Activated CD4-positive, alpha-beta memory T cell treated with anti-CD3 and anti-CD28 coated beads for 36 hours (primary cell): ENCODE measurements at regions of chr16 and their contacts with region 1.

Region 1: DNA sequence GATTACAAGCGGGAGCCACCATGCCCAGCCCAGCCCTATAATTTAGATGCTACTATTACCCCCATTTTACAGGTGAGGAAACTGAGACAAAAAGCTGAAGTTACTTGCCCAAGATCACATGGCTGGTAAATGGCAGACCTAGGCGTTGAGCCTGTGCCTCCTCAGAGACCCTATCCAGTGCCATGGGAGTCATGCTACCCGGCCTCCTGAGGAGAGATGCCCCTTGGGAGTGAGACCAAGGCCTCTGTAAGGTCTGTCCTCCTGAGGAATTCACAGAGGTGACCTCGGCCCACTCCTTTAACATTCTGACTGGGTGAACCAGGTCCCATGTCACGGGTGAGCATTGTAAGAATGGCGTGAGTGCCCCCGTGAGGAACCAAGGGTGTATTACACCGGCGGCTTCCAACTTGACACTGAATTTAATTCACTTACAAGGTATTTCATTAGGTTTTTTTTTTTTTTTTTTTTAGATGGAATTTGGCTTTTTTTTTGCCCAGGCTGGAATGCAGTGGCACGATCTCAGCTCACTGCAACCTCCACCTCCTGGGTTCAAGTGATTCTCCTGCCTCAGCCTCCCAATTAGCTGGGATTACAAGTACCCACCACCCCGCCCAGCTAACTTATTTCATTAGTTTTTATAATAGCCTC is 95.7 kb downstream of the ABCC6 start:
- DNase-seq: peak; percentile 80
- H3K4me3 Mint-ChIP-seq: no peak overlapping the region
- H3K27ac Mint-ChIP-seq: no peak overlapping the region
- H3K4me1 Mint-ChIP-seq: no peaks in the 10 kb centered on the region
- H3K27me3 Mint-ChIP-seq: no peaks in the 10 kb centered on the region

Region 2: GRCh38 chr16:15765880-15766279 is 361.7 kb before region 1 on chr16:
- CTCF ChIA-PET with region 1: interaction called, 11 read pairs
- POLR2A ChIA-PET with region 1: no interaction called
- intact Hi-C with region 1: loop called (anchors 1 kb)
- DNase-seq: peak; percentile 31
- H3K4me3 Mint-ChIP-seq: no peak overlapping the region
- H3K27ac Mint-ChIP-seq: no peak overlapping the region
- H3K4me1 Mint-ChIP-seq: no peaks in the 10 kb centered on the region
- H3K27me3 Mint-ChIP-seq: peaks cover 14% of the 10 kb centered on the region

Region 3: DNA sequence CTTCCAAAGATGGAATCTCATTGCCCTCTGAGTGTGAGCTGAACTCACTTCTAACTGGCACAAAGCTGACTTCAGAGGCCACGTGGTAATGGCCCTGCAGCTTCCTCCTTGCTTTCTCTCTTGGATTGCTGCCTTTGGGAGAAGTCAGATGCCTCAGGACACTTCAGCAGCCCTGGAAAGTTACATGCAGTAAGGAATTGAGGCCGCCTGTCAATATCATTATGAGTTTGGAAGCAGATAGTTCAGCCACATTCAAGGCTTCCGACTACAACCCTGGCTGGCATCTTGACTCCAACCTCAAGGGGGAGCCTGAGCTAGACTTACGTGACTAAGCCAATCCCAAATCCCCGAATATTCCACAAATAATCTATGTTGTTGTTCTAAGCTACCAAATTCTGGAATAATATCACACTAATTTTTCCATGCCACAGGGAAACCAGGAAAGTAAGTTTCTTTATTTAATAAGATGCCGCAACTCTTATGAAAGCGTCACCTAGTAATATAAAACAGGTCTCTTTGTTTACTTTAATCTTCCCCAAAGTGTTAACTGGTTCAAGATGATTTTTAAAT is 252.8 kb before region 1 on chr16:
- CTCF ChIA-PET with region 1: interaction called, 13 read pairs
- POLR2A ChIA-PET with region 1: no interaction called
- intact Hi-C with region 1: no loop called
- DNase-seq: no peak
- H3K4me3 Mint-ChIP-seq: no peak overlapping the region
- H3K27ac Mint-ChIP-seq: no peak overlapping the region
- H3K4me1 Mint-ChIP-seq: peaks cover 8% of the 10 kb centered on the region
- H3K27me3 Mint-ChIP-seq: no peaks in the 10 kb centered on the region

Region 4: DNA sequence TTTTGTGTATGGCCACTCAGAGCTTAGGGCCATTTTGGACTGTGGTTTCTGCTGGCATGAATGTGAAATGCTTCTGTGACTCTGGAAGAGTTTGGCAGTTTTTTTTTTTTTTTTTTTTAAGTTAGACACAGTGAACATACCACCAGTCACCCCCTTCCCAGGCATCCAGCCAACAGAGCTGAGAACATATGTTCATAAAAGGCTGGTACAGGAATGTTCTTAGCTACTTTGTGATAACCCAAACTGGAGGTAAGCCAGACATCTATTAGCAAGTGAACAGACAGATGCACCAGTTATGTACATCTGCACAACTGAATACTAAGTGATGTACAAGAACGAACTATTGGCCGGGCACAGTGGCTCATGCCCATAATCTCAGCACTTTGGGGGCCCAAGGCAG is 85.5 kb before region 1 on chr16:
- CTCF ChIA-PET with region 1: interaction called, 4 read pairs
- POLR2A ChIA-PET with region 1: no interaction called
- intact Hi-C with region 1: loop called (anchors 10 kb)
- DNase-seq: no peak
- H3K4me3 Mint-ChIP-seq: no peak overlapping the region
- H3K27ac Mint-ChIP-seq: no peak overlapping the region
- H3K4me1 Mint-ChIP-seq: peaks cover 23% of the 10 kb centered on the region
- H3K27me3 Mint-ChIP-seq: no peaks in the 10 kb centered on the region